ENCODE measurements at regions of chr11 and their contacts with region 1.

Region 1: DNA sequence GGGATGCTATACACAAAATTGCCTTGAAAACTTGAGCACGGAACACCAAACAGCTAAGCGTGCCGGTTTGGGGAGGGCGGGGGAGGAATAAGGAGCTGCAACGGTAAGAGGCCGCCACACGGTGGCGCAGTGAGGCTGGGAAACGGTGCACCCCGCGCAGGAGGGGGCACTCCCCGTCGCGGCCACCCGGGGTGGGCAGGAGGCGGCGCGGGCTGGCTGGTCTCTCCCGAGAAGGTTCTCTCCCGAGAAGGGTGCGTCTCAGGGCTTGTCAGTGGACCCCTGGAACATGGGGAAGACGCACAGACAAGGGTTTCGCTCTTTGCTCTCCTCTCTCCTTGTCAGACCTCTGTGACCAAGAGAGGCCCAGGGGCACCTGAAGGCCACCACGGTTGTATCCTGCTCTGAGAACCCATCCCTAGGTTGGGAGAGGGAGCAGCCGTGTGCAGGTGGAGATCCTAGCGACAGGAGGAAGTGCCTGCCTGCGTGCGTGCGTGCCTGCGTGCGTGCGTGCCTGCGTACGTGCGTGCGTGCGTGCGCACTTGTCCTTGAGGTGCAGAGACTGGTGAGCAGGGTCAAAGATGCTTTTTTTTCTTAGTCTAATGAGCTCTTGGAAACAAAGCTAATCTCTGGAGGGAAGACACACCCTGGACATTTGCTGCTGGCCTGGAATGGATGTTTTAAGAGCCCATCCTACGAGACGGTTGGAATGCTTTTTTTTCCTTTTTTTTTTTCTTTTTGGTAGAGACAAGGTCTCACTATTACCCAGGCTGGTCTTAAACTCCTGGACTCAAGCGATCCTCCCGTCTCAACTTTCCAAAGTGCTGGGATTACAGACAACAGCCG is 18.1 kb upstream of the JAM3 start:
- DNase-seq: peak in 1 of 2 experiments; percentile 85
- H3K4me3 ChIP-seq: peak overlapping the region in 1 of 4 experiments; percentile 26; a peak in 3 of 8 replicates
- H3K27ac ChIP-seq: no peak overlapping the region
- H3K4me1 ChIP-seq: peaks cover 1 to 14% (median 7%) of the 10 kb centered on the region in 4 experiments; a peak in 6 of 7 replicates
- H3K27me3 ChIP-seq: no peaks in the 10 kb centered on the region; a peak in 2 of 7 replicates
- CTCF ChIP-seq: peak; percentile 83 to 95 (median 92)
- EP300 ChIP-seq: no peak
- POLR2A ChIP-seq: no peak
- RAD21 ChIP-seq: peak; percentile 85 to 90

Region 2: DNA sequence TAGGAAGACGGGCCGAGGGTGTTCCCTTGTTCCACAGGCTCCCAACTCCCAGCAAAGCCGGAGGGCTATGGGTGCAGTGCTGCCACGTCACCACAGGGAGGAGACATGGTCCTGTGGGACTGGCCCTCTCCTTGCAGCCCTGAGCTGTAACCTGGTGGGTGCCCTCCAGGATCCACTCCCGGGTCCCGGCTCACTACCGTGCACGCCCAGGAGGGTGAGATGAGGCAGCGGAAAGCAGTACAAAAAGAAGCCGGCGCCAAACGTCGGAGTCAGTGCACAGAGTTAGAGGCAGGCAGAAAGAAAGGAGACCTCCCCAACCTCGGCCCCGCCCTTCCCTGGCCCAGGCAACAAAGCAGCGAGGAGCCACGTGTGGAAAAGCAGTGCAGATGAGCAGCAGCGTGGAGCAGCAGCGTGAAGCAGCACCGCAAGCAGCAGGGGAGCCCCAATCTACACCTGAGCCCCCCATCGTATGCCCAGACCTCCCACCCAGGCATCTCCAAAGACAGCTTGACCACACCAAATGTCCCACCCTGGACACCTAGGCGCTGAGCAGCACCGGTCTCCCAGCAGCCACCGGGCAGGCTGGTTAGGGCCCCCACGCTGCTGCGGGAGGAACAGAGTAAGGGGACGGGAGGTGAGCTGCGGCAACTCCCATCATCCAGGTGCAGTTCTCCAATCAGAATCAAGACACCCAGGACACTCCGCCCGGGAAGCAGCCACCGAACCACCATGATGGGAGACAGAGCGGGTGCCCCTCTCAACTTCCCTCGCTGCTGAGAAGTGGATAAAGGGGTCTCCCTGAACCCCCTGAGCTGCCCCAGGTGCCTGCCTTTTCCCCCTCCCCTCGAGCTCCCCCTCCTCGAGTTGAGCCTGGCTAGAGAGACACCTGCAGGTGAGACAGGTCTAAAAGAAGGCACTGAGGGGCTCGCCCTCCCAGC is 122.8 kb before region 1 on chr11:
- CTCF ChIA-PET with region 1: interaction called, 32 read pairs
- POLR2A ChIA-PET with region 1: no interaction called
- DNase-seq: peak in 1 of 2 experiments; percentile 89
- H3K4me3 ChIP-seq: no peak overlapping the region
- H3K27ac ChIP-seq: no peak overlapping the region; the same call in 1 of the 2 replicates
- H3K4me1 ChIP-seq: peaks cover 0 to 2% (median 0%) of the 10 kb centered on the region in 4 experiments; a peak in 4 of 7 replicates
- H3K27me3 ChIP-seq: no peaks in the 10 kb centered on the region
- CTCF ChIP-seq: peak; percentile 86 to 96 (median 94)
- EP300 ChIP-seq: no peak
- POLR2A ChIP-seq: no peak
- RAD21 ChIP-seq: peak; percentile 90

Region 3: GRCh38 chr11:134014511-134014910 is 36.3 kb before region 1 on chr11:
- CTCF ChIA-PET with region 1: interaction called, 45 read pairs
- POLR2A ChIA-PET with region 1: no interaction called
- DNase-seq: no peak
- H3K4me3 ChIP-seq: no peak overlapping the region
- H3K27ac ChIP-seq: no peak overlapping the region
- H3K4me1 ChIP-seq: no peaks in the 10 kb centered on the region; a peak in 1 of 7 replicates
- H3K27me3 ChIP-seq: 0 out of 7 replicates have a peak, but pooled peaks cover 0 to 4% (median 0%) of the 10 kb centered on the region in 4 experiments
- CTCF ChIP-seq: peak; percentile 70 to 82 (median 80)
- EP300 ChIP-seq: no peak
- POLR2A ChIP-seq: no peak
- RAD21 ChIP-seq: peak; percentile 71 to 86

Region 4: GRCh38 chr11:134062265-134063123 is 11.7 kb after region 1 on chr11:
- CTCF ChIA-PET with region 1: interaction called, 49 read pairs
- POLR2A ChIA-PET with region 1: interaction called, 3 read pairs
- DNase-seq: peak in 1 of 2 experiments; percentile 40
- H3K4me3 ChIP-seq: no peak overlapping the region
- H3K27ac ChIP-seq: no peak overlapping the region
- H3K4me1 ChIP-seq: peaks cover 0 to 2% (median 0%) of the 10 kb centered on the region in 4 experiments; a peak in 2 of 7 replicates
- H3K27me3 ChIP-seq: no peaks in the 10 kb centered on the region
- CTCF ChIP-seq: no peak
- EP300 ChIP-seq: no peak
- POLR2A ChIP-seq: no peak
- RAD21 ChIP-seq: no peak

Region 5: GRCh38 chr11:134098566-134099184 is 47.9 kb after region 1 on chr11:
- CTCF ChIA-PET with region 1: interaction called, 86 read pairs
- POLR2A ChIA-PET with region 1: no interaction called
- DNase-seq: no peak
- H3K4me3 ChIP-seq: no peak overlapping the region
- H3K27ac ChIP-seq: no peak overlapping the region
- H3K4me1 ChIP-seq: peaks cover 0 to 4% (median 2%) of the 10 kb centered on the region in 4 experiments; a peak in 3 of 7 replicates
- H3K27me3 ChIP-seq: no peaks in the 10 kb centered on the region
- CTCF ChIP-seq: peak in 2 of 3 experiments; percentile 68 to 75; a peak in 3 of 4 replicates
- EP300 ChIP-seq: no peak
- POLR2A ChIP-seq: no peak
- RAD21 ChIP-seq: peak; percentile 62 to 74

Region 6: GRCh38 chr11:134145715-134146114 is 95.0 kb after region 1 on chr11:
- CTCF ChIA-PET with region 1: interaction called, 41 read pairs
- POLR2A ChIA-PET with region 1: interaction called, 4 read pairs
- DNase-seq: no peak
- H3K4me3 ChIP-seq: no peak overlapping the region
- H3K27ac ChIP-seq: no peak overlapping the region
- H3K4me1 ChIP-seq: no peaks in the 10 kb centered on the region
- H3K27me3 ChIP-seq: no peaks in the 10 kb centered on the region
- CTCF ChIP-seq: no peak
- EP300 ChIP-seq: no peak
- POLR2A ChIP-seq: no peak
- RAD21 ChIP-seq: no peak

Measured in H1 (cell line).